Heart left ventricle (tissue), 16 donors: ENCODE measurements at regions of chr16 and their contacts with region 1.

Region 1: GRCh38 chr16:23905027-23905426 is 69.2 kb downstream of the PRKCB start:
- DNase-seq: peak in 2 of 5 donors; percentile 9 to 49
- ATAC-seq: peak in 3 of 4 donors; percentile 78 to 89 (median 79)
- H3K4me3 ChIP-seq: no peak overlapping the region
- H3K27ac ChIP-seq: peak overlapping the region in 1 of 12 donors; percentile 78
- H3K4me1 ChIP-seq: peaks cover 0 to 15% (median 0%) of the 10 kb centered on the region in 12 donors
- H3K27me3 ChIP-seq: peaks cover 0 to 5% (median 0%) of the 10 kb centered on the region in 9 donors
- CTCF ChIP-seq: no peak
- POLR2A ChIP-seq: no peak

Region 2: GRCh38 chr16:23826528-23827045 is 78.4 kb before region 1 on chr16:
- intact Hi-C with region 1: loop called in 1 of 10 experiments (anchors 10 kb)
- DNase-seq: no peak
- ATAC-seq: peak in 3 of 4 donors; percentile 47 to 80 (median 62)
- H3K4me3 ChIP-seq: peak overlapping the region in 1 of 12 donors; percentile 18
- H3K27ac ChIP-seq: peak overlapping the region in 2 of 12 donors; percentile 46 to 77
- H3K4me1 ChIP-seq: peaks cover 0 to 25% (median 0%) of the 10 kb centered on the region in 12 donors
- H3K27me3 ChIP-seq: no peaks in the 10 kb centered on the region
- CTCF ChIP-seq: no peak
- POLR2A ChIP-seq: no peak

Region 3: DNA sequence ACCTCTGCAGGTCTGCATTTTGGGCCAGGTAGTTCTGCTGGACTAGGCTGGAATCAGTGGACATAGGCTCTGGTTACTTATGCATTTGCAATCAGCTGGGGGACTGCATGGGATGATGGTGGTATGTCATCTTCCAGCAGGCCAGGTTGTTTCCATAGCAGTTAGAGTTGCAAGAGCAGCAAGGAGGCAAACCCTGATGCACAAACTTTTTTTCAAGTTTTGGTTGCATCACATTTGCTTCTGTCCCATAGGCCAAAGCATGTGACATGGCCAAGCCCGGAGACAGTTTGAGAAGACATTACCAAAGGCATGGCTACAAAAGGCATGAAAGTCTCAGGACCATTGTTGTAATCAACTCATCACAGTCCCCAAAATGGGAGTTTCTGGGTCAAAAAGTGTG is 11.0 kb before region 1 on chr16:
- intact Hi-C with region 1: loop called in 1 of 10 experiments (anchors 2 kb)
- DNase-seq: no peak
- ATAC-seq: no peak
- H3K4me3 ChIP-seq: no peak overlapping the region
- H3K27ac ChIP-seq: no peak overlapping the region
- H3K4me1 ChIP-seq: peaks cover 0 to 7% (median 0%) of the 10 kb centered on the region in 12 donors
- H3K27me3 ChIP-seq: peaks cover 0 to 6% (median 0%) of the 10 kb centered on the region in 9 donors
- CTCF ChIP-seq: no peak
- POLR2A ChIP-seq: no peak

Region 4: DNA sequence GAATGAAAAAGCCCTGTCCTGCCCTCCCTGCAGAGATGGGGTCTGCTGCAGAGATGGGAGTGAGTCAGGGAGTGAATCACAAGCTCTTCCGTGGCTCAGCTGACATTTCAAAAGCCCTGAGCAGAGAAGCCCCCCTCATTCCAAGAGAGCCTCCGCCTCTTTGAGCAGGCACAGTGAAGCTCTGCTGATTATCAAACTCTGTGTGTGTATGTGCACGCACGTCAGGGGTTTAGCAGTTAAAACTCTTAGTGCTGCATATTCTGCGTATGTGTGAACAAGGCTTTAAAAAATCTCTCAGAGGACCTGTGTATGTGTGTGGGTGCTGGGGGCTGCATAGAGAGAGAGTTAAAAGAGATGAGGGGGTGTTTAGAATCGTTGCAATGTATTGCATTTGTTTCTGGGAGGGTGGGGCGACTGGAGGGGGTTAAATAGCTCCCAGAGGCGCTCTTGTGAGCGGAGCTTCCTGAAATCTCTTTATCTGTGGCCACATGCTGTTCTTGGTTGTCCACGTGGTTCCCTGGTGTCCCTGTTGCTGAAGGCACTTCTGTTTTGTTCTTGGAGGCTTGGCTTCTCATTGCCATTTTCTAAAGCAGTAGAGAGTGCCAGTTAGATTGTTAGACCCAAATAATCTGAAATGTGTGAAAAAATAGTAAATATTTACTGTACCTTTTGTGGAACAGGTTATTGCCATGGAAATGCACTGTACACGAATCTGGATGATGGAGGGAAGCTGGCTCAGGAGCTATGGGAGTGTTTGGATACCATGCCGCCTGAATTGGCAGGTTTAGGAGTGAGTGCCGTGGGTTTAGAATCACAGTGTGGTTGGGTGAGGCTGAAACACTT is 47.3 kb after region 1 on chr16:
- intact Hi-C with region 1: no loop called
- DNase-seq: no peak
- ATAC-seq: peak in 2 of 4 donors; percentile 44 to 53
- H3K4me3 ChIP-seq: peak overlapping the region in 1 of 12 donors; percentile 12
- H3K27ac ChIP-seq: peak overlapping the region in 2 of 12 donors; percentile 41 to 57
- H3K4me1 ChIP-seq: peaks cover 0 to 49% (median 0%) of the 10 kb centered on the region in 12 donors
- H3K27me3 ChIP-seq: peaks cover 0 to 25% (median 0%) of the 10 kb centered on the region in 9 donors
- CTCF ChIP-seq: no peak
- POLR2A ChIP-seq: no peak

Region 5: DNA sequence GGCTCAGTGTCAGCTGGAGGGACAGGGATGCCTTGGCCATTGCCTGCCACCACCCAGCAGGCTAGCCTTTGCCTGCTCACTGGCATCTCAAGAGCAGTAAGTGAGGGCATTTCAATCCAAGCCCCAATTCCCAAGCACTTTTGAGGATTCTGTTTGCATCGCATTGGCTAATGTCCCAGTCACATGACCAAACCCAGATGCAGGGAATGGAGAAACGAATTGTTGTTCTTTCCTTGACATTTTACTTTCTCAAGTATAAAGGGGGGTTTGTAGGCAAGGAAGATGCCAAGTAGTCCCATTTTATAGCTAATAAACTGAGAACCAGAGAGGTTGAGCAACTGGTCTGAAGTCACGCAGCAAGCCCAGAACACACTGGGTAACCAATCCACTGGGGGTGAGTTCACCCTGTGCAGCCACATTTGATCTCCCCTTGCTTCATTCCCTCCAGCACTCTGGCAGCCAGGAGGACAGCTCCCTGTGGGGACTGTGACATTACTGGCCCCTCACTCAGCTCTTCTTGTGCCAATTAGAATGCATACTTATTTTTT is 157.3 kb after region 1 on chr16:
- intact Hi-C with region 1: no loop called
- DNase-seq: no peak
- ATAC-seq: no peak
- H3K4me3 ChIP-seq: no peak overlapping the region
- H3K27ac ChIP-seq: no peak overlapping the region
- H3K4me1 ChIP-seq: no peaks in the 10 kb centered on the region
- H3K27me3 ChIP-seq: peaks cover 0 to 14% (median 0%) of the 10 kb centered on the region in 9 donors
- CTCF ChIP-seq: no peak
- POLR2A ChIP-seq: no peak